ENCODE measurements at regions of chr1 and their contacts with region 1.

Region 1: GRCh38 chr1:214261206-214262123 is 19.5 kb upstream of the SMYD2 start:
- DNase-seq: peak; percentile 86 to 87
- ATAC-seq: peak; percentile 93 to 98 (median 96)
- H3K4me3 ChIP-seq: no peak overlapping the region
- H3K27ac ChIP-seq: peak overlapping the region in 7 of 10 donors; percentile 23 to 85 (median 66)
- H3K4me1 ChIP-seq: peaks cover 0 to 20% (median 7%) of the 10 kb centered on the region in 9 donors
- H3K27me3 ChIP-seq: peaks cover 0 to 67% (median 24%) of the 10 kb centered on the region in 7 donors
- CTCF ChIP-seq: peak; percentile 92 to 99 (median 98)

Region 2: GRCh38 chr1:214018386-214019268 is 242.8 kb before region 1 on chr1:
- intact Hi-C with region 1: no loop called
- DNase-seq: no peak
- ATAC-seq: no peak
- H3K4me3 ChIP-seq: no peak overlapping the region
- H3K27ac ChIP-seq: peak overlapping the region in 6 of 10 donors; percentile 2 to 55 (median 38)
- H3K4me1 ChIP-seq: peaks cover 0 to 50% (median 17%) of the 10 kb centered on the region in 9 donors
- H3K27me3 ChIP-seq: no peaks in the 10 kb centered on the region
- CTCF ChIP-seq: no peak

Region 3: GRCh38 chr1:214224611-214225354 is 36.7 kb before region 1 on chr1:
- intact Hi-C with region 1: loop called in 3 of 10 experiments (anchors 5 kb)
- DNase-seq: peak; percentile 11 to 17
- ATAC-seq: peak in 5 of 8 donors; percentile 4 to 59 (median 31)
- H3K4me3 ChIP-seq: peak overlapping the region in 8 of 10 donors; percentile 12 to 41 (median 35)
- H3K27ac ChIP-seq: peak overlapping the region in 6 of 10 donors; percentile 11 to 68 (median 46)
- H3K4me1 ChIP-seq: peaks cover 0 to 24% (median 14%) of the 10 kb centered on the region in 9 donors
- H3K27me3 ChIP-seq: peaks cover 0 to 12% (median 3%) of the 10 kb centered on the region in 7 donors
- CTCF ChIP-seq: no peak

Region 4: DNA sequence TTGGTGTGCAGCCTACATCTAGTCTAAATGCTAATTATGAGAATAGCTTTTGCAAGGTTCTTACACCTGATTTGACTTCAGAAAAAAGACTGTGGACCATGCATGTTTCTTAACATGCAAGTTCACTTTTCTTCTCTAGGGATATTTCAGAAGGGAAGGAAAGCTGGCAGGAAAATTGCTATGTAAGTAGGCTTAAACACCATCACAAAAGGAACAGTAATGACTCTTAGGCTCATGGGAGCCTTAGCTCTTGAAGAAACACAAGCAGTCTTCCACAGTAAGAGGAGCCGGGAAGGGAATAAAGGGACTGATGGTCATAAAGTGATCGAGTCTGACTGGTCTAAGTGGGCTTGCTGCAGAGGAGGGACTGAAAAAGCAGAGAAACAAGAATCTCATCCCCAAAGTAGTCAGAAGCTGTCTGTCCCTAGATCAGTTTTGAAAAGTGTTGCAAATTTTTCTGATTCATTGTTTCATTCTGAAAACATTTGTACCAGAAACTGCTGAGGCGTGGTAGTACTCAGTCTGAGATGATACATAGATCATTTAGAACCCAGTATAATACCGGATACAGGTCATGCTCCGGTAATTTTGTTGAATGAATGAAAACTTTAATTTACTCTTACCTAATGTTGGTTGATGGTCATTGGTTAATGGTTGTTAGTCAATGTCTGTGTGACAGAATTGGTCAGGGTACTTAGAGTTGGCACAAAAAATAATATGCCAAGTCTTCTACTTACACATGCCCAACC is 60.4 kb after region 1 on chr1:
- intact Hi-C with region 1: loop called in 5 of 10 experiments (anchors 1 to 5 kb)
- DNase-seq: no peak
- ATAC-seq: no peak
- H3K4me3 ChIP-seq: no peak overlapping the region
- H3K27ac ChIP-seq: no peak overlapping the region
- H3K4me1 ChIP-seq: peaks cover 0 to 36% (median 26%) of the 10 kb centered on the region in 9 donors
- H3K27me3 ChIP-seq: no peaks in the 10 kb centered on the region
- CTCF ChIP-seq: no peak

Region 5: GRCh38 chr1:214328770-214329469 is 67.5 kb after region 1 on chr1:
- intact Hi-C with region 1: loop called (anchors 1 to 5 kb)
- DNase-seq: peak; percentile 74 to 83
- ATAC-seq: peak; percentile 83 to 91 (median 88)
- H3K4me3 ChIP-seq: no peak overlapping the region
- H3K27ac ChIP-seq: peak overlapping the region in 6 of 10 donors; percentile 31 to 86 (median 76)
- H3K4me1 ChIP-seq: peaks cover 6 to 62% (median 27%) of the 10 kb centered on the region in 9 donors
- H3K27me3 ChIP-seq: no peaks in the 10 kb centered on the region
- CTCF ChIP-seq: peak; percentile 83 to 96 (median 92)

Region 6: GRCh38 chr1:214377886-214378285 is 116.4 kb after region 1 on chr1:
- intact Hi-C with region 1: no loop called
- DNase-seq: no peak
- ATAC-seq: no peak
- H3K4me3 ChIP-seq: no peak overlapping the region
- H3K27ac ChIP-seq: no peak overlapping the region
- H3K4me1 ChIP-seq: peaks cover 0 to 7% (median 0%) of the 10 kb centered on the region in 9 donors
- H3K27me3 ChIP-seq: no peaks in the 10 kb centered on the region
- CTCF ChIP-seq: no peak

Region 7: GRCh38 chr1:214537219-214537618 is 275.8 kb after region 1 on chr1:
- intact Hi-C with region 1: no loop called
- DNase-seq: no peak
- ATAC-seq: peak in 2 of 8 donors; percentile 31 to 51
- H3K4me3 ChIP-seq: no peak overlapping the region
- H3K27ac ChIP-seq: peak overlapping the region in 1 of 10 donors; percentile 50
- H3K4me1 ChIP-seq: peaks cover 0 to 61% (median 43%) of the 10 kb centered on the region in 9 donors
- H3K27me3 ChIP-seq: no peaks in the 10 kb centered on the region
- CTCF ChIP-seq: no peak

Region 8: DNA sequence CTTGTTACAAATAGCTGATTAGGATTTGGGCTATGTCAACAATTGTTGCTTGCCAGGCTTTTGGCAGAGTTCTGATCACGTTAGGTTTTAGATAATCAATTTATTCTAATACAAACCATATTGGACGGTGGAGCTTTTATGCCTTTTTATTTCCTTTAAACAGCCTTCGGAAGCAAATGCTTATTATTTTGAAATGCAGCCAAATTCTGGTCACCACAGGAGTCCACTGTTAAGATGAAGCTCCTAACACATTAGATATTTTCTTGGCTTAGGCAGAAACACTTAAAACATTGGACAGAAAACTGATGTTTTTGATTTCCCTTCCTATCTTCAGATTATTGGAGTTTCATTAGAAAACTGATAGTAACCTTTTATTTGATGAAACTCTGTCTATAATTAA is 424.4 kb after region 1 on chr1:
- intact Hi-C with region 1: no loop called
- DNase-seq: no peak
- ATAC-seq: no peak
- H3K4me3 ChIP-seq: no peak overlapping the region
- H3K27ac ChIP-seq: no peak overlapping the region
- H3K4me1 ChIP-seq: no peaks in the 10 kb centered on the region
- H3K27me3 ChIP-seq: peaks cover 0 to 17% (median 0%) of the 10 kb centered on the region in 7 donors
- CTCF ChIP-seq: no peak